ENCODE measurements at regions of chr22 and their contacts with region 1.

Region 1: GRCh38 chr22:45318168-45318557 is 8.4 kb downstream of the FAM118A start:
- DNase-seq: peak; percentile 74
- ATAC-seq: peak; percentile 86
- H3K4me3 Mint-ChIP-seq: peak overlapping the region; percentile 86
- H3K27ac Mint-ChIP-seq: peak overlapping the region; percentile 99
- H3K4me1 Mint-ChIP-seq: peaks cover 53% of the 10 kb centered on the region
- H3K27me3 Mint-ChIP-seq: no peaks in the 10 kb centered on the region

Region 2: GRCh38 chr22:45163451-45164269 is 154.5 kb before region 1 on chr22 and contains the start of gene NUP50:
- POLR2A ChIA-PET with region 1: interaction called, 10 read pairs
- DNase-seq: peak; percentile 99
- ATAC-seq: peak; percentile 89
- H3K4me3 Mint-ChIP-seq: peak within 1 kb of the TSS; percentile 100
- H3K27ac Mint-ChIP-seq: peak within 1 kb of the TSS; percentile 99
- H3K4me1 Mint-ChIP-seq: peaks cover 50% of the 10 kb centered on the region
- H3K27me3 Mint-ChIP-seq: no peaks in the 10 kb centered on the region
- total RNA-seq, gene NUP50: 150 to 152 TPM

Region 3: GRCh38 chr22:45366713-45367112 is 48.5 kb after region 1 on chr22:
- POLR2A ChIA-PET with region 1: no interaction called
- DNase-seq: no peak
- ATAC-seq: no peak
- H3K4me3 Mint-ChIP-seq: no peak overlapping the region
- H3K27ac Mint-ChIP-seq: no peak overlapping the region
- H3K4me1 Mint-ChIP-seq: no peaks in the 10 kb centered on the region
- H3K27me3 Mint-ChIP-seq: no peaks in the 10 kb centered on the region

Region 4: DNA sequence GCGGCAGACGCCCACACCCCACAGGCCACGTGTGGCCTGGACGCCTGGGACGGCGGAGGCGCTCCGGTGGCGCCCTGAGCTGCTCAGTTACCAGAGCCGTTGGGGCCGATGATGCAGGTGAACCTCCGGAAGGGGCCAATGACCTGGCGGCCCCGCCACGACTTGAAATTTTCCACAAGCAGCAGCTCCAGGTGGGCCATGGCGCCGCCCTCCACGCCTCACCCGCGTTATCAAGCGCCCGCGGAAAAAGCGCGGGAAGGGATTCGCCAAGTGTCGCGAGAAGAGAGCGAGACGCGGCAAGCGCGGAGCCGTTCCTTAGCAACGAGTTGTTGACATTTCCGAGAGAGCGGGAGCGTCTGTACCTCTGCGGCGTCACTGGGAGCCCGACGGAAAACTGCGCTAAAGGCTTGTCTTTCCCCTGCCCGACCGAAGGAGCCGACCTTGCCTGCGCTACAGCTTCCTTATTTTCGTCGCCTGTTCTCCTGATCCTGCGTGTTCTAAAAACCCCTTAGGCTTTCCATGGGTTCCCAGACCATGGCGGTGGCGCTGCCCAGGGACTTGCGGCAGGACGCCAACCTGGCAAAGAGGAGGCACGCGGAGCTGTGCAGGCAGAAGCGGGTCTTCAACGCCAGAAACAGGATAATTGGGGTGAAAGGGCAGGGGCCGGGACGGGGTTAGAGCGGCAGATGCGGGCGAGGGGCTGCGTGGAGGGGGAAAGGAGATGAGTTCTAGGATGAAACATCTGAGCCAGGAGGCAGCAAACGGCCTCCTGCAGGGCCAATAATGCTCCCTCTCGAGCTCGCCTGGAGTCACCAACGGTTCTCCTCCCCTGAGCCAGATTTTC is 95.4 kb after region 1 on chr22 and contains the starts of genes RIBC2 and SMC1B:
- POLR2A ChIA-PET with region 1: interaction called, 28 read pairs
- DNase-seq: peak; percentile 92
- ATAC-seq: peak; percentile 88
- H3K4me3 Mint-ChIP-seq: peak within 1 kb of the TSS; percentile 89
- H3K27ac Mint-ChIP-seq: peak within 1 kb of the TSS; percentile 89
- H3K4me1 Mint-ChIP-seq: peaks cover 12% of the 10 kb centered on the region
- H3K27me3 Mint-ChIP-seq: no peaks in the 10 kb centered on the region
- total RNA-seq, gene RIBC2: 11.2 to 12.1 TPM
- total RNA-seq, gene SMC1B: 2.4 to 2.5 TPM

Measured in activated naive CD8-positive, alpha-beta T cell treated with anti-CD3 and anti-CD28 coated beads, Interleukin-2, amount 10 ng/mL, durations not matched to agents 7 days and 5 days (primary cell).